MCF 10A (cell line): ENCODE measurements at regions of chr19 and their contacts with region 1.

Region 1: DNA sequence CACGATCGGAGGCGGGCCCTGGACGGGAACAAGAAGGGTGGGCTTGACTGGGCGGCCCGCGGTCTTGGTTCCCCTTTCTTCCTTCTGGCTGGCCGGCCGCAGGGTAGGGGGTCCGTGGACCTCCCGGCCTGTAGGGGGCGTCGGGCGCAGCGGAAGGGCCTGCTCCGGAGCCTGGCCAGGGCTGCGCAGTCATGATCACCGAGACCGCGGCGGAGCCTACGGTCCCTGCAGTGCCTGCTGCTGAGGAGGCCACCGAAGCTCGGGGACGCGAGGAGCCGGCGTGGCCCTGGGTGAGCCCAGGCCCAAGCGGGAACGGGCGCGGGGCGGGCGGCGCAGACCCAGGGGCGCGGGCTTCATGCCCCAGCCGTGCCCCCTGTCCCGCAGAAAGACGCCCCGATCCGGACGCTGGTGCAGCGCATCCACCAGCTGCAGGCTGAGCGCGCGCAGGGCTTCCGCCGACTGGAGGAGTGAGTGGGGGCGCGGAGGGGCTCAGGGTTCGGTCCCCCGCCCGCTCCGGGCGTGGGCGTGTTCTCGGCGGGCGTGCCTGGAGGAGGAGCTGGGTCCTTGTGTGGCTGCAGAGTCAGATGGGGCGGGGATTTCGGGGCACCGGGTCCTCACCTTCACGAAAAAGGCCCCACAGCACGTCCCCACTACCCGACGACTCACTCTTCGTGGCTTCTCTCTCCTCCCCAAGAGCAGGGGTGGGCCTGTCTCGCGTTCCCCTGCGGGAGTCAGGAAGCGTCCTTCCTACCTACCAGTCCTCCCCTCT is at the start of gene REX1BD:
- DNase-seq: peak; percentile 72
- H3K4me3 Mint-ChIP-seq: peak within 1 kb of the TSS; percentile 88
- H3K27ac Mint-ChIP-seq: peak within 1 kb of the TSS; percentile 90
- H3K4me1 Mint-ChIP-seq: peaks cover 11% of the 10 kb centered on the region
- H3K27me3 Mint-ChIP-seq: no peaks in the 10 kb centered on the region
- CTCF ChIP-seq: peak; percentile 75
- total RNA-seq, gene REX1BD: 29.6 and 49.3 TPM in 2 replicates

Region 2: DNA sequence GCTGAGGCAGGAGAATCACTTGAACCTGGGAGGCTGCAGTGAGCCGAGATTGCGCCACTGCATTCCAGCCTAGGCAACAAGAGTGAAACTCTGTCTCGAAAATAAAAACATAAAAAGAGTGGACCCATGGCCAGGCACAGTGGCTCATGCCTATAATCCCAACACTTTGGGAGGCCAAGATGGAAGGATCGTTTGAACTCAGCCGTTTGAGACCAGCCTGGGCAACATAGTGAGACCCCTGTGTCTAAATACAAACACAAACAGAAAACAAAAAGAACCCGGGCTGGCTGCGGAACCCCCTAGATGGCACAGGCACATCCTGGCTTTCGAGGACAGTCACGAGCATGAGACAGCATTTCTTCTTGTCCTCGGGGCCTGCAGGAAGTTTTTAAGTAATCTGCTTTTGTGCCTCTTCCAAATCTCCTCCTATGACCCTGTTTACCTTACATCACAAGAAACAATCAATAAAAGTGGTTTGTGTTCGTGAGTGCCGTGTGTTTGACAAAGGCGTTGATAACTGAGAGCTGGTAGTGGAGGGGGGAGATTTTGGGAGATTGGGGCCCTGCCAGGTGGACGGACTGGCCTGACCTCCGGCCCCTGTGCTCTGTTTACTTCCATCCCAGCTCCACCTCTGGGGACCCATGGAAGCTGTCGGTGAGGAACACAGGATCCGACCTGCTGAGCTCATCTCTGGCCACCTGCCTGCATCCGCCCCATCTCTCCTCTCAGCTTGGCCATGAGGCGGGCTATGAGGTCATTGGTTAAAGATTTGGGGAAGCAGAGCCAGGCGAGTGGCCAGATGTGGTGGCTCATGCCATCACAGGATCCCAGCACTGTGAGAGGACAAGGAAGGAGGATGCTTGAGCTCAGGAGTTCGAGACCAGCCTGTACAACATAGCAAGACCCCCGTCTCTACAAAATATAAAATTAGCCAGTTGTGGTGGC is 208.7 kb before region 1 on chr19:
- CTCF ChIA-PET with region 1: no interaction called
- POLR2A ChIA-PET with region 1: no interaction called
- intact Hi-C with region 1: no loop called
- DNase-seq: peak; percentile 60
- H3K4me3 Mint-ChIP-seq: no peak overlapping the region
- H3K27ac Mint-ChIP-seq: no peak overlapping the region
- H3K4me1 Mint-ChIP-seq: peaks cover 10% of the 10 kb centered on the region
- H3K27me3 Mint-ChIP-seq: no peaks in the 10 kb centered on the region
- CTCF ChIP-seq: no peak

Region 3: GRCh38 chr19:18450931-18451845 is 137.6 kb before region 1 on chr19:
- CTCF ChIA-PET with region 1: interaction called, 20 read pairs
- POLR2A ChIA-PET with region 1: interaction called, 4 read pairs
- intact Hi-C with region 1: no loop called
- DNase-seq: peak; percentile 78
- H3K4me3 Mint-ChIP-seq: no peak overlapping the region
- H3K27ac Mint-ChIP-seq: peak overlapping the region; percentile 14
- H3K4me1 Mint-ChIP-seq: peaks cover 9% of the 10 kb centered on the region
- H3K27me3 Mint-ChIP-seq: no peaks in the 10 kb centered on the region
- CTCF ChIP-seq: peak; percentile 97

Region 4: DNA sequence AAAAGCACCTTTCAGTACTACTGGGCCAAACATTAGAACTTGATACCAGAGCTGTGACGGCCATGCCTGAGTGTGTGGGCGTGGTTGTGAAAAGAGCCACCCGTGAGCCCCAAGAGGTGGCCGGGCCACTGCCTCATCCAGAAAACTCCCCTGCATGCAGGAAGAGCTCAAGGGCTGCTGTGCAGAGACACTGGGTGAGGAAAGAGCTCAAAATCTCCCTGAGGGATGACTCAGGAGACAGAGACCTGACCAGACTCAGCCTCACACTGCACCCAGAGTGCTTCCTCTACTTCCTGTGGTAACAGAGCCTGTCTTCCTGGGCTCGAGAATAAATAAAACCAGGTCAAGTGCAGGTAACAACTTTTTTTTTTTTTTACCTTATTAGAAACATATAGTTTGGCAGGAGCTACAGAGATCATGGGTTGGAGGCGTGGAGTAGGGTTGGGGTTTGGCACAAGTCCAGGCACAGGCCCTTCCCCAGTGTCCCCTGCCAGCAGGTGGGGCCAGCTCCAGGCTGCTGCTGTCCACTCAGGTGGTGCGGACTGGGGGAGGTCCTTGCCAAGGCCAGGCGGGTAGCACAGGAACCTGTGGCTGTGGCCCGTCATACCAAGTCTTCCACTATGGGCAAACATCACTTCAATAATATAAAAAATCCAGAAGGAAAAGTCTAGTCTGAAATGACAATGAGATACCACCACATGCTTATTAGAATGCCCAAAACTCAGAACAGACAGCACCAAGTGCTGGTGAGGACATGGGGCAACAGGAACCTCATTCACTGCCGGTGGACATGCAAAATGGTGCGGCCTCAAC is 92.4 kb before region 1 on chr19:
- CTCF ChIA-PET with region 1: interaction called, 4 read pairs
- POLR2A ChIA-PET with region 1: interaction called, 14 read pairs
- intact Hi-C with region 1: no loop called
- DNase-seq: peak; percentile 86
- H3K4me3 Mint-ChIP-seq: peak overlapping the region; percentile 53
- H3K27ac Mint-ChIP-seq: peak overlapping the region; percentile 67
- H3K4me1 Mint-ChIP-seq: peaks cover 22% of the 10 kb centered on the region
- H3K27me3 Mint-ChIP-seq: no peaks in the 10 kb centered on the region
- CTCF ChIP-seq: peak; percentile 10

Region 5: DNA sequence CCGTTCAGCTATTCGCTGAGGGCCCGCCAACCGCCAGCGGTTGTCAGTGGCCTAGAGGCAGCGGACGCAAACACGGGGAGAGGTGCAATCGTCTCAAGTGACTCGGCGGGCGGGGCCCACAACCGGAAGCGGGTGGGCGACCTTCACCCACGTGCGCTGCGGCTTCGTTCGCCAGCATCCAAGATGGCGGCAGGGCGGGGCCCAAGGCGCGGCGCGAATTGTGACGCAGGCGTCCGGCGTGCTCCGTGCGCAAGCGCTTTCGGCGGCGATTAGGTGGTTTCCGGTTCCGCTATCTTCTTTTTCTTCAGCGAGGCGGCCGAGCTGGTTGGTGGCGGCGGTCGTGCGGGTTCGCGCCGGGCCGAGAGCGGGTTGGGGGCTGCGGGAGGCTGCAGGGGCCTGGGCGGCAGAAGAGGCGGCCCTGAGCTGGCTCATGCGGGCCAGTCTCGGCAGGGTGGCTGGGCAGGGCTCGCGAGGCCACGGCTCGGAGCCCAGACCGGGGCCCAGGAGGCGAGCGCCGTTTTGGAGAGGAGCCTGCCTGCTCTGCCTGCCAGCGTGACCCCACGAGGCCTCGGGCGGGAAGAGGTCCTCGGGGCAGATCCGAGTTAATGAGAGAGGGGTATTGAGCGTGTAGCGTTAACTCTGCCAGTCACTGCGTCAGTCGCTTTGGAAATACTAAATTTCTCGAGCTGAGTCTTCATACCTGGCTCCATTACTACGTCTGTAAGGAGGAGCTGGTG is 17.1 kb before region 1 on chr19 and contains the start of gene UBA52:
- CTCF ChIA-PET with region 1: interaction called, 27 read pairs
- POLR2A ChIA-PET with region 1: interaction called, 87 read pairs
- intact Hi-C with region 1: no loop called
- DNase-seq: peak; percentile 99
- H3K4me3 Mint-ChIP-seq: peak within 1 kb of the TSS; percentile 87
- H3K27ac Mint-ChIP-seq: peak within 1 kb of the TSS; percentile 98
- H3K4me1 Mint-ChIP-seq: peaks cover 9% of the 10 kb centered on the region
- H3K27me3 Mint-ChIP-seq: no peaks in the 10 kb centered on the region
- CTCF ChIP-seq: no peak
- total RNA-seq, gene UBA52: 1,330 and 1,392 TPM in 2 replicates

Region 6: DNA sequence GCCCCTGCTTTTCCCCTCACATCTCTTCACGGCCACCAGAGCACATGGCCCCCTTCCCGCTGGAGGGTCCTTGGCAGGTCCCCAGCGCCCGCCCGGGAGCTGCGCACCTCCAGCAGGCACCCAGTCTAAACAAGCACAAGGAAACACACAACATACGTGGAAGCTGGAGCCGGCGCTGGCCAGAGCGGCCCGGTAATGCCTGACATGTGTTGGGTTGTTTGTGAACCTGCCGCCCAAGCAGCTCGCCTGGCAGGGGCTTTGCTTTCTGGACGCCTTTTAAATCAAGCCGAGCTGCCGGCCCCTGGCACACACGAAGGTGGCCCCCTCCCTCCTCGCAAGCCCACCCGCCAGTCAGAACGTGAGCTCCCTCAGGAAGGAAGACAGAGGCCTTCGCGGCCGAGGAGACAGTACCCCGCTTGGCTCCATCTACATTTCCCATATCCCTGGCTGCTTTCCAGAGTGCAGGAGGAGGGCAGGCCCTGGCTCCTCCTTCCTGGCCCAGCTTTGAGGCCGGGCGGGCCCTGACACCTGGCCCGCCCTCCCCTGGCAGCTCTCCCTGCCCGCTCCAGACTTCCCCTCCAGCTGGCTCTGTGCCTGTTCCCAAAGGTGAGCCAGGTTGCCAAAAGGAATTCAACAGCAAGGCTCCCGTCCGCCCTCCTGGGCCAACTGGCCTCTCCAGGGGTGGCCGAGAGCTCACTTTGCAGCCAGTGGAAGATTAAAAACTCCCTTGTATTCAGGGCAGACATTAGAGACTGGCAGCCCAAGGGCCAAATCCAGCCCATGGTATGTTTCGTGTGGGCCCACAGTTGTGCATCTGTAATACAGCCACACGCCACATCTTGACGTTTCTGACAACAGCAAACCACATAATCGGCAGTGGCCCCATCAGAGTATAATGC is 173.6 kb after region 1 on chr19:
- CTCF ChIA-PET with region 1: interaction called, 4 read pairs
- POLR2A ChIA-PET with region 1: no interaction called
- intact Hi-C with region 1: loop called (anchors 5 kb)
- DNase-seq: peak; percentile 98
- H3K4me3 Mint-ChIP-seq: peak overlapping the region; percentile 63
- H3K27ac Mint-ChIP-seq: peak overlapping the region; percentile 55
- H3K4me1 Mint-ChIP-seq: peaks cover 35% of the 10 kb centered on the region
- H3K27me3 Mint-ChIP-seq: no peaks in the 10 kb centered on the region
- CTCF ChIP-seq: no peak

Region 7: GRCh38 chr19:18919086-18919899 is 330.5 kb after region 1 on chr19 and contains the starts of genes COPE and DDX49:
- CTCF ChIA-PET with region 1: interaction called, 4 read pairs
- POLR2A ChIA-PET with region 1: interaction called, 11 read pairs
- intact Hi-C with region 1: no loop called
- DNase-seq: peak; percentile 100
- H3K4me3 Mint-ChIP-seq: peak within 1 kb of the TSS; percentile 89
- H3K27ac Mint-ChIP-seq: peak within 1 kb of the TSS; percentile 91
- H3K4me1 Mint-ChIP-seq: peaks cover 14% of the 10 kb centered on the region
- H3K27me3 Mint-ChIP-seq: no peaks in the 10 kb centered on the region
- CTCF ChIP-seq: no peak
- total RNA-seq, gene COPE: 310 and 456 TPM in 2 replicates
- total RNA-seq, gene DDX49: 87.7 and 98.8 TPM in 2 replicates